Right ventricle myocardium superior (tissue), 1 donor: ENCODE measurements at regions of chr11 and their contacts with region 1.

Region 1: GRCh38 chr11:30314625-30315024 is 8.3 kb upstream of the ARL14EP start:
- DNase-seq: no peak
- ATAC-seq: no peak

Region 2: DNA sequence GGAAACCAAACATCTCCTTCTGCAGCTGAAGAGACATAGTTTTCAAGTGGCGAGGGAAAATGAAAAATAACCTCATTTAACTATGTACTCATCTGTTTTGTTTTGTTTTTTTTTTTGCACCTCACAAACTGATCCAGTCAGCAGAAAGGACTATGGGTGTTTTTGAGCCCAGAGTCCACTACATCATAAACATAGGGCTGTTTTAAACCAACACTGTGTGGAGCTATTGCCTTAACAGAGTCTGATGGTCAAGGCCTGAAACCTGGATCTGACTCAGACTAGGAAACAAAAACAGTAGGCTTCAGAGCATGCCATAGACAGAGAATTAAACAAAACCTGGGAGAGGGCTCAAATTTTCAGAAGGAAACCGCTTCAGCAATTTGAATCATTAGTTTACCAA is 183.1 kb before region 1 on chr11:
- intact Hi-C with region 1: loop called (anchors 10 kb)
- DNase-seq: no peak
- ATAC-seq: peak; percentile 51